PC-3 (cell line): ENCODE measurements at regions of chr6 and their contacts with region 1.

Region 1: DNA sequence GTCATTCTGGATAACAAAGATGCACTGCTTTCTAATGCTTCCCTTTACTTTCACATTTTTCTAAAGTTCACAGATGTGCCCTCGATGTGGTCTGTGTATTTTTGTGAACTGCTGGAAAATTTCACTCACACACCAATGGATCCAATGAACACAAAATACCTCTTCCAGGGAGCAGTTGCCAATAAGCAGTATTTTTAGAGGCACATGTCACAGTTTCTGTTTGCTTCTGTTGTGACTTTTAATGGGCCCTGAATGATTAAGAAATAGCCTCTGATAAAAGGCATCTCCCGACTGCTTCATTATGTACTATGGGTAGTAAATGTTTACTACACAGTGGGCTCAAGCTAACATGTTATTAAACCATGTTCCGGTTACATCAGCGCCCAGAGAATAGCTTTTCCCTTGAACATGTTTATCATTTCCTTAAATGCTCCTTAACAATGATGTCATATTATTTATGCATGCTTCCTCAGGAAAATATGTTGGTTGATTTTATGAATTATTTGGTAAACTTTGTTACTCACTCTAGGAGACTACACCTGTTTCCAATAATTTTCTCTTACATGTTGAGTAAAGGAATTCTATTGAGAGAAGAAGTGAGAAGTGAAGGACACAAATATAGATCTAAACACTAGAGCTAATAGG is 188.0 kb downstream of the KCNQ5 start:
- DNase-seq: no peak
- ATAC-seq: no peak
- H3K4me3 ChIP-seq: no peak overlapping the region
- H3K27ac ChIP-seq: no peak overlapping the region
- H3K4me1 ChIP-seq: peaks cover 14% of the 10 kb centered on the region
- H3K27me3 ChIP-seq: no peaks in the 10 kb centered on the region
- CTCF ChIP-seq: no peak

Region 2: GRCh38 chr6:72776456-72776855 is 33.4 kb before region 1 on chr6:
- CTCF ChIA-PET with region 1: no interaction called
- POLR2A ChIA-PET with region 1: interaction called, 10 read pairs
- intact Hi-C with region 1: no loop called
- DNase-seq: no peak
- ATAC-seq: no peak
- H3K4me3 ChIP-seq: no peak overlapping the region
- H3K27ac ChIP-seq: no peak overlapping the region
- H3K4me1 ChIP-seq: no peaks in the 10 kb centered on the region
- H3K27me3 ChIP-seq: no peaks in the 10 kb centered on the region
- CTCF ChIP-seq: no peak

Region 3: DNA sequence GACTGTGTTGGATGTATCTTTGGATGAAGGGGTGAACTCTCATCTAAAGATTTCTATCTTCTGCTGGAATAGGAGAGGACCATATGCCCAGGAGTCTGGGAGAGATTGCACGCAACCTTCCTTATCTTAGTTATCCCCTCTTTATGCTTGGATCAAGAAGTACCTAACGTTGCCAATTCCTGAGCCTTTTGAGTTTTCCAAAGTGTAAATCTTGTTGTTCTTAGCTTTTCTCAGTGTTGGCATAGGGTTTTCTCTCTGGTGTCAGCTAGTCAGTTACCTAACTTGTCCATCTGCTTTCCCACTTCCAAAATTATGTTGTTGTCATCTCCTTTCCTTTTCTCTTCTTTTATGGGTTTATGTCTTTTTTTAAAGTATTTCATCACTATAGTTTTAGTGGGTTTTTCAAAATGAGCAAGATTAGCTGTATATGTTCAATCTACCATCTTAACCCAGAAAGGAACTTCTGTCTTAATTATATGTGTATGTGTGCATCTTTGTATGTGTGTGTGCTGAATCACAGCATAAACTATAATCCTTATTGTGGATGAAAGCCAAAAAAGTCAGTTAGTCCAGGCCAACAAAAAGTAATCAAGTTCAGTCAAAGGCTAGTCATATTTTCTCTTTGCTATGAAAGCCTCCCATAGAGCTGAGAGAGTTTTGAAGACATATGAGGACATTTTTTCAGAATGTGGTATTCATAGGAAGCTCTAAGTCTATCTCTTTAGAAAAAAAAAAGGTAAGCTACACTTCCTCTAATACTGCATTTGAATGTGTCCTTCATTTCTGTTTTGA is 343.3 kb after region 1 on chr6:
- CTCF ChIA-PET with region 1: no interaction called
- POLR2A ChIA-PET with region 1: no interaction called
- intact Hi-C with region 1: no loop called
- DNase-seq: peak; percentile 14
- ATAC-seq: no peak
- H3K4me3 ChIP-seq: no peak overlapping the region
- H3K27ac ChIP-seq: no peak overlapping the region
- H3K4me1 ChIP-seq: no peaks in the 10 kb centered on the region
- H3K27me3 ChIP-seq: no peaks in the 10 kb centered on the region
- CTCF ChIP-seq: no peak

Region 4: DNA sequence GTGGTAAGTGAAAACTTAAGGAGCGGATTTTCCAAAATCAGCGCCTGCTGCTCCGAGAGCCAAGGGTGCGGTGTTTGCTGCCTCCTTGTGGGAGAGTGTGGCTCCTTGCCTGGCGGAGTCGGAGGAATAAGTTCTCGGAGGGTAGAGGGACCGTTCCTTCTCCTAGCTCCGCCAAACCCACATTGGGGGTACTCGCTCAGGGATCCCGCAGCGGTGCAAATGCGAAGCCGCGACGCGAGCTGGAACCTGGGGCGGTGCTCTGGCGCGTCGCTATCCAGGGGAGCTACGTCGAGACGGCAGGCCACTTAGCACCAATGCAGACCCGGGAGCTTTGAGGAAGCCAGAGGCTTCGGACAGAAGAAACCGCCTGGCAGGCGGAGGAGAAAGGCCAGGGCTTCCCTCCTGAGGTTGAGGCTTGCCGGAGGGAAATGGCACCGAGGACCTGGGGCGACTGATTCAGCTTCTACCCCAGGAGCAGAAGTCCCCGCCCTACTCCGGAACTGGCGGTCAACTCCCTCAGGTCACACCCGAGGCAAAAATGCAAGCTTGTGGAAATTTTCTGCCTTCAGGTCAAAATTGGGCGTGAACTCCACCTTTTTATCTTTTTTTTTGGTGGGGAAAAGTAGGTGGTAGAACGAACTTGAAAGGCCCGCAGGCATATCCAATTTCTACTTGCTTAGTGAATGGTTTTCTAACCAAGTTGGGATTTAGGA is 579.1 kb after region 1 on chr6:
- CTCF ChIA-PET with region 1: no interaction called
- POLR2A ChIA-PET with region 1: no interaction called
- intact Hi-C with region 1: no loop called
- DNase-seq: peak; percentile 77
- ATAC-seq: peak; percentile 87
- H3K4me3 ChIP-seq: peak overlapping the region; percentile 79
- H3K27ac ChIP-seq: peak overlapping the region; percentile 85
- H3K4me1 ChIP-seq: no peaks in the 10 kb centered on the region
- H3K27me3 ChIP-seq: no peaks in the 10 kb centered on the region
- CTCF ChIP-seq: peak; percentile 73